A673 (cell line): ENCODE measurements at regions of chr2 and their contacts with region 1.

Region 1: GRCh38 chr2:60283626-60284025 is 269.8 kb downstream of the BCL11A start:
- DNase-seq: no peak
- H3K4me3 ChIP-seq: no peak overlapping the region
- H3K27ac ChIP-seq: no peak overlapping the region
- H3K4me1 ChIP-seq: no peaks in the 10 kb centered on the region
- H3K27me3 ChIP-seq: no peaks in the 10 kb centered on the region
- CTCF ChIP-seq: no peak

Region 2: DNA sequence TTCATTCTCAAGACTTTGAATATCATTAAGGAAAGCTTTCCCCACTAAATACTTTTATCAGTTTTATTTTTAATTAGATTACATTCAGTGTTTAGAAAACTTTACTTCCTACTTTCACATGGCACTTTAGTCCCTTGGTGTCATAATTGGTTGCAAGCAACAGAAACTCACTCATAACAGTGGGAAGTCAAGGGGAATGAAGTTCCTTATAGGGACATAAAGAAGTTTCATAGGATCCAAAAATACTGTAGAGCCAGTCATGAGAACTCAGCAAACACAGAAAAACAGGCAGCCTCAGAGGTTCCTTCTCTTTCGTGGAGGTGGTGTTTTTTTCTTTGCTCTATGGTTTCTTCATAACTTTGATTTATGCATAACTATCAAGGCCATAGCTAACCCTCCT is 539.2 kb before region 1 on chr2:
- CTCF ChIA-PET with region 1: no interaction called
- POLR2A ChIA-PET with region 1: no interaction called
- intact Hi-C with region 1: no loop called
- DNase-seq: no peak
- H3K4me3 ChIP-seq: no peak overlapping the region
- H3K27ac ChIP-seq: no peak overlapping the region
- H3K4me1 ChIP-seq: no peaks in the 10 kb centered on the region
- H3K27me3 ChIP-seq: peaks cover 29% of the 10 kb centered on the region
- CTCF ChIP-seq: no peak

Region 3: GRCh38 chr2:60693551-60693950 is 409.9 kb after region 1 on chr2:
- CTCF ChIA-PET with region 1: no interaction called
- POLR2A ChIA-PET with region 1: interaction called, 10 read pairs
- intact Hi-C with region 1: no loop called
- DNase-seq: no peak
- H3K4me3 ChIP-seq: no peak overlapping the region
- H3K27ac ChIP-seq: no peak overlapping the region
- H3K4me1 ChIP-seq: no peaks in the 10 kb centered on the region
- H3K27me3 ChIP-seq: peaks cover 4% of the 10 kb centered on the region
- CTCF ChIP-seq: no peak